Activated T-helper 1 cell treated with anti-CD3 and anti-CD28 coated beads, Interleukin-12 subunit alpha, Interleukin-12 subunit beta, Interleukin-2, Interleukin-4 antibody, amounts not matched to agents 30 ng/mL and 10 ng/mL and 1 ng/mL, durations not matched to agents 14 hours and 24 hours and 36 hours (primary cell): ENCODE measurements at regions of chr6 and their contacts with region 1.

Region 1: DNA sequence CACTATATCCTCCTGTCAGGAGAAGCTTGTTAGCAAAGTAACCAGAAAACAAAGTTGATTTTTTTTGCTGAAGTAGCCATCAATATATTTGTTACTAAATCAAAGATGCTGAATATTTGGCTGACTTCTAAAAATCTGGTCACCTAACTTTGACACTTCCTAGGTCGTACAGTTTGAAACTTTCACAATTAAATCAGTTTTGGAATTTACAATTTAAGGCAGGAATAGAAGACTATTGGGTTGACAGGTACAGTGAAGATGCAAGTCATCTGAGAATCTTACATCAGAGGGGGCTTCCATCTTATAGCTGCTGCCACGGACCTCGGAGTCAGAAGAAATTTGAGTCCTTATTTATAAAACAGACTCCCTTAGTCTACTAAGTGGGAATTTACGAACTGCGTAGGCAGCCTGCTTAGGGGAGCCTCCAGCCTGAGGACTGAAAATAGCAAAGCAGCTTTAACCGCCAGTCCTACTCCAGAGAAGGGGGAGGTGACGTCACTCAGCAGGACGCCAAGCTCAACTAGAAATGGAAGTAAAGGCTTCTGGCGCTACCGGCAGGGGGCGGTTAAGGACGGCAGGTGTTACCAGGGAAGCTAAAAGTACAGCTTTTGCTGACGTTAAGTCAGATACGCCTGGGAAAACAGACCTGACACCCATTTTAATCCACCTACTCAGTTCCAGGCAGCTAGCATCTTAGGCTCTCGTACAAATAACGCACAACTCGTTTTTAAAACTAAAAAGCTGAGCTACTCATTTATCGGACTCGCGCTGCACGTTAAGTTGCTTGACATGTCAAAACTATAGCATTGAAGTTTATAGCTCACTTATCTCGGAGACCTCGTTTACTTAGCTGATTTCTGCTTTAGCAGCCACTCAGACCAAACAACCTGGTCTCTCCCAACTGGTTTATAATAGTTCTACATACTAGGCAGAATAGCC is 61.1 kb upstream of the HFE start:
- DNase-seq: peak; percentile 88
- H3K4me3 Mint-ChIP-seq: peak overlapping the region; percentile 85
- H3K27ac Mint-ChIP-seq: peak overlapping the region; percentile 96
- H3K4me1 Mint-ChIP-seq: peaks cover 93% of the 10 kb centered on the region
- H3K27me3 Mint-ChIP-seq: no peaks in the 10 kb centered on the region

Region 2: DNA sequence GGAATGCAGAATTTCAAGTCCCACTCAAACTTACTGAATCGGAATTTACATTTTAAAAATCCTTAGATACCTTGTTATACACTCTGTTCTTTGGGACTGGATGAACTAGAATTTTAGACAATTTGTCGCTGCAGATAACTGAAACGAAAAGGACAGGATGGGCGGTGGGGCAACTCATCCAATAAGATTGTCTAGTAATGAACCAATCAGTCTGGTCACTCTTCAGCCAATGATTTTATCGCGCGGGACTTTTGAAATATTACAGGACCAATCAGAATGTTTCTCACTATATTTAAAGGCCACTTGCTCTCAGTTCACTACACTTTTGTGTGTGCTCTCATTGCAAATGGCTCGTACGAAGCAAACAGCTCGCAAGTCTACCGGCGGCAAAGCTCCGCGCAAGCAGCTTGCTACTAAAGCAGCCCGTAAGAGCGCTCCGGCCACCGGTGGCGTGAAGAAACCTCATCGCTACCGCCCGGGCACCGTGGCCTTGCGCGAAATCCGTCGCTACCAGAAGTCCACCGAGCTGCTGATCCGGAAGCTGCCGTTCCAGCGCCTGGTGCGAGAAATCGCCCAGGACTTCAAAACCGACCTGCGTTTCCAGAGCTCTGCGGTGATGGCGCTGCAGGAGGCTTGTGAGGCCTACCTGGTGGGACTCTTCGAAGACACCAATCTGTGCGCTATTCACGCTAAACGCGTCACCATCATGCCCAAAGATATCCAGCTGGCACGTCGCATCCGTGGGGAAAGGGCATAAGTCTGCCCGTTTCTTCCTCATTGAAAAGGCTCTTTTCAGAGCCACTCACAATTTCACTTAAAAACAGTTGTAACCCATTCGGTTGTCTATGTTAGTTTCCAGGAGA is 19.1 kb after region 1 on chr6:
- intact Hi-C with region 1: loop called (anchors 1 kb)
- DNase-seq: peak; percentile 82
- H3K4me3 Mint-ChIP-seq: peak overlapping the region; percentile 86
- H3K27ac Mint-ChIP-seq: peak overlapping the region; percentile 98
- H3K4me1 Mint-ChIP-seq: peaks cover 49% of the 10 kb centered on the region
- H3K27me3 Mint-ChIP-seq: no peaks in the 10 kb centered on the region

Region 3: GRCh38 chr6:26054857-26055669 is 28.9 kb after region 1 on chr6:
- intact Hi-C with region 1: loop called (anchors 1 kb)
- DNase-seq: peak; percentile 83
- H3K4me3 Mint-ChIP-seq: peak overlapping the region; percentile 91
- H3K27ac Mint-ChIP-seq: peak overlapping the region; percentile 99
- H3K4me1 Mint-ChIP-seq: peaks cover 42% of the 10 kb centered on the region
- H3K27me3 Mint-ChIP-seq: peaks cover 3% of the 10 kb centered on the region

Region 4: GRCh38 chr6:27871924-27872638 is 1845.9 kb after region 1 on chr6:
- intact Hi-C with region 1: loop called (anchors 2 kb)
- DNase-seq: peak; percentile 87
- H3K4me3 Mint-ChIP-seq: peak overlapping the region; percentile 88
- H3K27ac Mint-ChIP-seq: peak overlapping the region; percentile 96
- H3K4me1 Mint-ChIP-seq: peaks cover 63% of the 10 kb centered on the region
- H3K27me3 Mint-ChIP-seq: no peaks in the 10 kb centered on the region